ENCODE measurements at regions of chr2 and their contacts with region 1.

Region 1: DNA sequence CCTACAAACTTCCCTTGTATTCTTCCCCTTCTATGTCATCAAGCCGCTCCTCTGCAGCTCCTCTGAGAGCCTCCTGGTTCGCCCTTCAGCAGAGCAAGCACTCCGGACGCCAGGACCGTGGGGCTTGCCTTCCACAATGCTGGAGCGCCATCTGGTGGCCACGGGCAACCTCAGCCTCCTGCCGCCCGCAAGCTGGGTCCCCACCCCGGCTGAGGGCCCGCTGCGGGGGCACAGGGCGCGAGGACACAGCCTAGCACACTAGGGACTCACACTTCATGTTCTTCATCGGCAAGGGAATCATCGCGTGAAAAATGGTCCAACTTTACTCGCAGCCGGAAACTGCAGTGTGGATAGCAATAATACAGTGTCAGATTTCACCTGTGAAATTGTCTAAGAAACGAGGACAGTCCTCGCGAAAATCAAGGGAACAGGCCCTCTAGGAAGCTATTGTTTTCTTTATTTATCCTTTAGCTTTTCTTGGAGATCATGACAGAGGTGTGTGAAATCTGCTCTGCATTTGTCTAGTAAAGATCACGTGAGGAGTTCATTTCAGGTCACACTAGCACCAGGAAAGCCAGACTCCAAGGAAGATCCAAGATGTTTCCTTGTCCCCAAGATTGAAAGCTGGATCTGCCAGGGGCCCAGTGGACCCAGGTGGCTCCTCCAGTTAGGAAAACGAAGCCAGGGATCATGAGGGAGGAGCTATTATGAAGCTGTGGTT is 5.8 kb downstream of the PRLH start:
- DNase-seq: peak; percentile 68
- H3K4me3 ChIP-seq: no peak overlapping the region
- H3K27ac ChIP-seq: no peak overlapping the region
- H3K4me1 ChIP-seq: peaks cover 25% of the 10 kb centered on the region
- H3K27me3 ChIP-seq: no peaks in the 10 kb centered on the region
- CTCF ChIP-seq: peak; percentile 76 to 97

Region 2: DNA sequence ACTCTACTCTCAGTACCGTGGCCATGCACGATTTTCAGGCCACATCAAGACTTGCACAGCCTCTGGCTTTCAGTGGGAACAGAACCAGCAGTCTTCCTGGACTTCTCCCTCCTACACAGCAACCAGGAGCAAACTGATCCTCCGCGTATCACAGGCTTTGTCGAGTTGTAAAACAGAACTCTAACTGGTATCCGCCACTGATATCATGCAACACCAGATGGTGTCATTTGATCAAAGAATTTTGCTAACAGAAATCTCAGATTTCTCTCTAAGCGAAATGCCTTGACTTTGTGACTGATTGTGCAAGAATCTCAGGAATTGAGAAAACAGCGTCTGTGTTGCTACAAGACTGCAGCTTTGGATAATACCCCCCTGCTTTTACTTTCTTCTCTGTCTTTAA is 400.8 kb before region 1 on chr2:
- CTCF ChIA-PET with region 1: no interaction called
- dilution Hi-C with region 1: no loop called
- in situ Hi-C with region 1: loop called (anchors 25 kb)
- intact Hi-C with region 1: loop called (anchors 1 kb)
- DNase-seq: peak; percentile 63
- H3K4me3 ChIP-seq: no peak overlapping the region
- H3K27ac ChIP-seq: no peak overlapping the region
- H3K4me1 ChIP-seq: peaks cover 2% of the 10 kb centered on the region
- H3K27me3 ChIP-seq: no peaks in the 10 kb centered on the region
- CTCF ChIP-seq: peak; percentile 22 to 44

Region 3: DNA sequence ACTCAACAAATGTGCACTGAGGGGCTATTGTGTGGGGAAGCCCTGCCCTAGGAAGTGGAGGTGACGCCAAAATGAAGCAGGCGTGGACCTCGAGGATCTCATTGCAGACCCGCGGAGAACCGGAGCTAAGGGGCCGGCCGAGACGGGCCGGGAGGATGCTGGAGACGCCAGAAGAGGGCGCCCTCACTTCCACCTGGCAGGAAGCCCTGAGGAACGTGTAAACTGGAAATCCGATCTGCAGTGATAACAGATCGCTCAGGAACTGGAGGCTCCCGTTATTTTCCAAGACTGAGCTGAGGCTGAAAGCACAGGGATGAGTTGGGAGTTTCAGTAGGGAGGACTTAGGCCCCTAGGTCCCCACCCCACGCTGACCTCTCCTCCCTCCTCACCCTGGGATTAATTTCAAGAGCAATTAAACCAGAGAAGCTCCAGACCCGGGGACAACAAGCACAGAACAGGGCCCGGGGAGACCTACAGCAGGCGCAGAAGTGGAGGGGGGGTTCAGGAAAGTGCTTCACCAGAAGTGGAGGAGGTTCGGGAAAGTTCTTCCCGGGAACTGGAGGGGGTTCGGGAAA is 150.6 kb before region 1 on chr2:
- CTCF ChIA-PET with region 1: interaction called, 4 read pairs
- dilution Hi-C with region 1: no loop called
- in situ Hi-C with region 1: loop called in 1 of 2 experiments (anchors 25 kb)
- intact Hi-C with region 1: loop called (anchors 1 kb)
- DNase-seq: peak; percentile 59
- H3K4me3 ChIP-seq: no peak overlapping the region
- H3K27ac ChIP-seq: no peak overlapping the region
- H3K4me1 ChIP-seq: peaks cover 9% of the 10 kb centered on the region
- H3K27me3 ChIP-seq: no peaks in the 10 kb centered on the region
- CTCF ChIP-seq: peak; percentile 65 to 87

Region 4: GRCh38 chr2:237512774-237513466 is 59.3 kb before region 1 on chr2:
- CTCF ChIA-PET with region 1: interaction called, 41 read pairs
- dilution Hi-C with region 1: no loop called
- in situ Hi-C with region 1: loop called (anchors 5 kb)
- intact Hi-C with region 1: loop called (anchors 1 kb)
- DNase-seq: peak; percentile 61
- H3K4me3 ChIP-seq: no peak overlapping the region
- H3K27ac ChIP-seq: no peak overlapping the region
- H3K4me1 ChIP-seq: no peaks in the 10 kb centered on the region
- H3K27me3 ChIP-seq: no peaks in the 10 kb centered on the region
- CTCF ChIP-seq: peak; percentile 71 to 91

Region 5: GRCh38 chr2:237673126-237674001 is 101.2 kb after region 1 on chr2:
- CTCF ChIA-PET with region 1: no interaction called
- dilution Hi-C with region 1: no loop called
- in situ Hi-C with region 1: no loop called
- intact Hi-C with region 1: no loop called
- DNase-seq: peak; percentile 79
- H3K4me3 ChIP-seq: peak overlapping the region; percentile 31 to 47 (median 44)
- H3K27ac ChIP-seq: peak overlapping the region; percentile 96
- H3K4me1 ChIP-seq: peaks cover 28% of the 10 kb centered on the region
- H3K27me3 ChIP-seq: no peaks in the 10 kb centered on the region
- CTCF ChIP-seq: peak; percentile 78 to 89

Measured in mammary epithelial cell (primary cell).